Right cardiac atrium (tissue), 5 donors: ENCODE measurements at regions of chr17 and their contacts with region 1.

Region 1: DNA sequence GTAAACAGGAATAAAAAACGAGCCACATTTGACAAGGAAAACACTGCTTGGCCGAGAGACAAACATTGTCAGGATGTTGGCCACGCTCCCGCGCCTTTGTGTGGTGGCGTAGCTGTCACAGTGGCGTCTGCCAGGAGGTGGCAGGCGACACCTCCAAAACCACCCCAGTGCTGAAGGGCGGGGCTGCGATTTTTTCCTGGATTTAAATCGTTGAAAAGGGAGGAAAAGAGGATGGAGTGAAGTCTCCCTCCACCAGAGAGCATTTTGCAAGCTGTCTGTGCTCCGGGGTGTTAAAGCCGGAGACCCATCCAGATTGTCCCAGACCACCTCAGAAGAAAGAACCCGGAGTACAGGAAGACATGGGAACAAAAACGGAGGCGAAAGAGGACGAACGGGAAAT is 12.7 kb downstream of the MRM3 start:
- DNase-seq: peak; percentile 89 to 95 (median 94)
- ATAC-seq: peak; percentile 77
- H3K4me3 ChIP-seq: peak overlapping the region; percentile 33
- H3K27ac ChIP-seq: no peak overlapping the region
- H3K4me1 ChIP-seq: no peaks in the 10 kb centered on the region
- H3K27me3 ChIP-seq: no peaks in the 10 kb centered on the region

Region 2: DNA sequence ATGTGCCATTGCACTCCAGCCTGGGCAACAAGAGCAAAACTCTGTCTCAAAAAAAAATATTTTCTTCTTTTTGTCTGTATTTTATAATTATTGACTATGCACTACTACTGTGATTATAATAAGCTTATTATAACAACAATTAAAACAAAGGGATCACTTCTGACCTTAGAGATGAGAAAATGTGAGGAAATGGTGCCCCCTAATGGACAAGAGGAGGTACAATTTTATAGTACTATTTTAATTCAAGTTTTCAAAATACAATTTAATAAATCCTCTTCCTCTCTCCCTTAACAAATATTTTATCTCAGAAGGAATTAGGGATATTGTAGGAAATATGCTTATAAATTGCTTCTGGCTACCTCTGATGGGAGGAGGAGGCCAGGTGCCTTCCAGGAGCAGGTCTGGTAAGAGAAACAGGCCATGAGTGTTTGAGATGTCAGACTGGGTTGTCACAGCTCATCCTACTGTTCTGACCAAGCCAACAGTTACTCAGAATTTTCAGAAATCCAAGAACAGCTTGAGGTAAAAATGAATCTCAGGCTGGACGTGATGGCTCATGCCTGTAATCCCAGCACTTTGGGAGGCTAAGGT is 94.3 kb before region 1 on chr17:
- intact Hi-C with region 1: no loop called
- DNase-seq: no peak
- ATAC-seq: no peak
- H3K4me3 ChIP-seq: no peak overlapping the region
- H3K27ac ChIP-seq: no peak overlapping the region
- H3K4me1 ChIP-seq: no peaks in the 10 kb centered on the region
- H3K27me3 ChIP-seq: no peaks in the 10 kb centered on the region

Region 3: DNA sequence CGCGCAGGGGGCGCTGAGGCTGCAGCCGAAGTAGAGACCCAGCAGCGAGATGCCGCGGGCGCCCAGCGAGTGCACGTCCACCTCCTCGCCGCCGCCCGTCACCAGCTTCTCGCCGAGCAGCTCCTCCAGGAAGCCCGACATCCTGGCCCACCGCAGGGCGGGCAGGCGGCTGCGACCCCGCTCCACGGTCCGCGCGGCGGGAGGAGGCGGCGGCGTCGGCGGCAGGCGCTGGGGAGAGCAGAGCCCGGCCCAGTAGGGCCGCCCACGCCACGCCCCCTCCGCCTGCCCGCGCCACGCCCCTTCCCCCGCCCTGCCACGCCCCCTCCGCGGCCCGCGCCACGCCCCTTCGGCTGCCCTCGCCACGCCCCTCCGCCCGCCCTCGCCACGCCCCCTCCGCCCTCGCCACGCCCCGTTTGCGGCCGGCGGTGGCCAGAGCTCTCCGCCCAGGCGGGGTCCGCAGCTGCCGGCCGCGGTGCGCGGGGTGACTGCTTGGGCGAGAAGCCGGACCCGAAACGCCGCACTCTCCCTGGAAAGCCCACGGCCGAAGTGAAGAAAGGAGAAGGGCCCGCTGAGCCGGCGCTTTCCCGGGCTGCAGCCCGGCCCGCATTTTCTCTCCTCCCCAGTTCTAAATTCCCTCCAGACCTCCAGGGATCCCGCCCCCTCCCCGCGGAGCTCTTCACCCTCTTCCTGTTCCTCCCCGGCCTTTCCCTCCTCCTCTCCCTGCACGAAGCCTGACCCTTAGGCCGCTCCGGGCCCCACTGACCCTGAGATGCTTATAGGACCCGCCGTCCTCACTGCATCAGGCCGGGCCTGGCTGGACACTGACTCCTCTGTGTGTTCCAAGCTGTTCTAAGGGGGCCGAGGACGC is 184.9 kb after region 1 on chr17 and contains the start of gene NXN:
- intact Hi-C with region 1: loop called (anchors 1 to 5 kb)
- DNase-seq: peak; percentile 86 to 96 (median 95)
- ATAC-seq: peak; percentile 92 to 95
- H3K4me3 ChIP-seq: peak within 1 kb of the TSS; percentile 93
- H3K27ac ChIP-seq: peak within 1 kb of the TSS; percentile 31
- H3K4me1 ChIP-seq: no peaks in the 10 kb centered on the region
- H3K27me3 ChIP-seq: no peaks in the 10 kb centered on the region
- total RNA-seq, gene NXN: 14.7 to 21.8 (median 17.3) TPM

Region 4: DNA sequence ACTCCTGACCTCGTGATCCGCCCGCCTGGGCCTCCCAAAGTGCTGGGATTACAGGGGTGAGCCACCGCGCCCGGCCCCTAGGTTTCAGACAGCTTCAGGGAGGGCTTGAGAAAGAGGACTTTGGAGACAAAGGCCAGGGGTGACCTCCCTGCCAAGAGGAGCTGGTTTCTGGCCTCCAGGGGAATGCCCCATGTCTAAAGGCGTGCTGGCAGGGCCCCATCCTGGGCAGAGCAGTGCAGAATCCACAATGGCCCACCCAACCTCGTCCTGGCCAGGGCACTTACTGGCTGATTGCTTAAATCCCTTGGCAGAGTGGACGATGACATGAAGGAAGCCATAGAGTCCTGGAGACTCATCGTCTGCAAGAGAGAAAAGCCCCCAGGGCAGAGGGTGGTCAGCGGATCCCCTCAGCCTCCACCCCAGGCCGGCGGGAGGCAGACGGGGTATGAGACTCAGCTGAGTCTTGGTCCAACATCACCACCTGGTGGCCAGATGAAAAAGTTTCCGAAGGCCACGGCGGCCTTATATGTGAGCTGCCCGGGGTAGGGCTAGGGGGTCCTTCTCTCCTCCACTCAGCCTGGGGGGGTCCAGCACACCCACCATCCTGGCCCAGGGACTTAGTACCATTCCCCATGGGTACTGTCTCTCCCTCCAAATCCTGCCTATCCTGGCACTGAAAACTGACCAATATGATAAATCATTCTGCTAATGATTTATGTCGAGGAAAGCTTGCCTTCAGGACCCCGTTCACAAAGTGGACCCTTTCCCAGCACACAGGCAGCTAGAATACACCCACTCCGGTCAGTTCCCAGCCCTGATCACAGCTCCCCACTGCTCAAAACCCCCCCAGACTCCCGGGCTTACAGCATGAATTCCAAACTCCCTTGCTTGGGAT is 261.1 kb after region 1 on chr17:
- intact Hi-C with region 1: loop called in 1 of 4 experiments (anchors 10 kb)
- DNase-seq: peak; percentile 66 to 86 (median 83)
- ATAC-seq: peak; percentile 77 to 80
- H3K4me3 ChIP-seq: no peak overlapping the region
- H3K27ac ChIP-seq: no peak overlapping the region
- H3K4me1 ChIP-seq: no peaks in the 10 kb centered on the region
- H3K27me3 ChIP-seq: no peaks in the 10 kb centered on the region

Region 5: DNA sequence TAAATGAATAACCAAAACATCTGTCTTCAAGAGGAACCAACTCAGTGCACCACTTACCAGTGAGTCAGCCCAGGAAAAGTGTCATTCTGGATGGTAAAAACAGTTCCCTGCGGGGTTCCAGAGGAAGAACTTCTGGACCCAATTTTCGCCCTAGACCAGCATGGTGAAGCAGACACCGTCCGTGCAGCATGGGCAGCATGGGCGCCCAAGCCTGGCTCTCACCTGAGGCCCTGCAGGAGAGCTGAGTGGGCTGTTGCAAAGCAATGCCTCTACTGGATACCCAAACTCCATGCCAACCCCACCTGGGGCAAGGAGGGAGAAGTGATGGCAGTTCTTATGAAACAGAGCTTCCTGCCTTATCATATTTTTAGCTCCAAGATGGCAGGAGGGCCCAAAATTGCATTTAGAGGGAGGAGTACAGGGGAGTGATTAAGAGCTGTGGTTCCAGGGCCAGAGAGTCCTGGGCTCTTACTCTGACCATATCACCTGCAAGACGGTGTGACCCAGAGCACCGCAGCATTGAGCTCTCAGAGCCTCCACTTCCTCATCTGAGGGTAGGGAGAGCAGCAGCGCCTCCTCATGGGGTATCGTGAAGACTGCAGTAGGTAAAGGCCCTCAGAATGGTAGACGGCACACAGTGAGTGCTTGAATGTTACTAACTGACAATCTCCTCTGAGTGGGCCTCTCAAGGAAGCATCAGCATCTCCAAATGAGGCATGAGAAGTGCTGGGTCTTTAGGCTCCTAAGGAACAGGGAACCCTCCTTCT is 738.1 kb after region 1 on chr17:
- intact Hi-C with region 1: no loop called
- DNase-seq: no peak
- ATAC-seq: peak; percentile 42 to 56
- H3K4me3 ChIP-seq: no peak overlapping the region
- H3K27ac ChIP-seq: peak overlapping the region; percentile 55
- H3K4me1 ChIP-seq: no peaks in the 10 kb centered on the region
- H3K27me3 ChIP-seq: no peaks in the 10 kb centered on the region